Right cardiac atrium (tissue), 5 donors: ENCODE measurements at regions of chr9 and their contacts with region 1.

Region 1: GRCh38 chr9:6584881-6585597 is 60.5 kb downstream of the GLDC start:
- DNase-seq: no peak
- ATAC-seq: no peak
- H3K4me3 ChIP-seq: no peak overlapping the region
- H3K27ac ChIP-seq: no peak overlapping the region
- H3K4me1 ChIP-seq: no peaks in the 10 kb centered on the region
- H3K27me3 ChIP-seq: no peaks in the 10 kb centered on the region

Region 2: GRCh38 chr9:5288591-5288990 is 1296.4 kb before region 1 on chr9:
- intact Hi-C with region 1: no loop called
- DNase-seq: no peak
- ATAC-seq: no peak
- H3K4me3 ChIP-seq: no peak overlapping the region
- H3K27ac ChIP-seq: no peak overlapping the region
- H3K4me1 ChIP-seq: no peaks in the 10 kb centered on the region
- H3K27me3 ChIP-seq: no peaks in the 10 kb centered on the region

Region 3: DNA sequence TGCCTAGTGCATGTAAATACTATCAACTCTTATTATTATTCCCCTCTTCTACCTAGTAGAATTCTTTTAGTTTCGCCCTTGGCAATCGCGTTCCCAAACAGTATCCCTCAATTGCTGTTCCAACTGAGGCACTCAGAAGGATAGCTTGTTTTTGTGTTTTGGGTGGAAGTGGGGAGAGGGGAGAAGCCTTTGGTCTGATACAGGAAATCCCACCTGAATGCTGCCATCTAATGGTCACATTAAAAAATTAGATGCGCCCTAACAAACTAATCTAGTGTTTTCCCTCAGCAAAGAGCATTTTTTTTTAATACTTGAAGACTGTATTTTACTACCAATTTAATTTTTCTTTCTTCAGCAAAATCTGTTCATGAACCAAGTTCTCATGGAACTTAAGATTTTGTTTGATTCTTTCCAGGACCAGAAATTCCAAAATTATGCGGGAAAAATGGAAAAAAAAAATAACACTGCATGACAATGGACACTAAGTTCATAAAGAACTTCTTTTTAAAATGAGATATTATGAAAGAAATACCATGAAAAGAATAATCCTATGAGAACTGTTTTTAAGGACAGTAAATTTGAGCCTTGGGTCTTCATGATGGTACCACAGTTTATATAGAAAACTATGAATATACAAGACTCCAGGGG is 82.7 kb after region 1 on chr9:
- intact Hi-C with region 1: loop called in 1 of 4 experiments (anchors 10 kb)
- DNase-seq: no peak
- ATAC-seq: no peak
- H3K4me3 ChIP-seq: no peak overlapping the region
- H3K27ac ChIP-seq: no peak overlapping the region
- H3K4me1 ChIP-seq: no peaks in the 10 kb centered on the region
- H3K27me3 ChIP-seq: no peaks in the 10 kb centered on the region

Region 4: DNA sequence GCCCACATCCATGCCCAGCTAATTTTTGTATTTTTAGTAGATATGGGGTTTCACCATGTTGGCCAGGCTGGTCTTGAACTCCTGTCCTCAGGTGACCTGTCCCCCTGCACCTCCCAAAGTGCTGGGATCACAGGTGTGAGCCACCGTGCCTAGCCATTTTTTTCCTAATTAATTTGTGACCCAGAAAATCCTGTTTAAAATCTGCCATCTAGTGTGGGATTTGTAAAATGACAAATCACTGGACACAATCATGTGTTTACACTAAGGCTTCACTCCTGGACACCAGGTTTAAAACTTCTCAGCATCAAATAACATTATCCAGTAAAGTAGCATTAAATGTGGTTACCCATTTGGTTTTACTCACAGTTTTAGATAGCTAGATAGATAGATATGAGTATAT is 154.2 kb after region 1 on chr9:
- intact Hi-C with region 1: loop called in 1 of 4 experiments (anchors 5 kb)
- DNase-seq: no peak
- ATAC-seq: no peak
- H3K4me3 ChIP-seq: no peak overlapping the region
- H3K27ac ChIP-seq: no peak overlapping the region
- H3K4me1 ChIP-seq: no peaks in the 10 kb centered on the region
- H3K27me3 ChIP-seq: no peaks in the 10 kb centered on the region